Activated CD4-positive, alpha-beta memory T cell treated with anti-CD3 and anti-CD28 coated beads for 36 hours (primary cell): ENCODE measurements at regions of chr4 and their contacts with region 1.

Region 1: DNA sequence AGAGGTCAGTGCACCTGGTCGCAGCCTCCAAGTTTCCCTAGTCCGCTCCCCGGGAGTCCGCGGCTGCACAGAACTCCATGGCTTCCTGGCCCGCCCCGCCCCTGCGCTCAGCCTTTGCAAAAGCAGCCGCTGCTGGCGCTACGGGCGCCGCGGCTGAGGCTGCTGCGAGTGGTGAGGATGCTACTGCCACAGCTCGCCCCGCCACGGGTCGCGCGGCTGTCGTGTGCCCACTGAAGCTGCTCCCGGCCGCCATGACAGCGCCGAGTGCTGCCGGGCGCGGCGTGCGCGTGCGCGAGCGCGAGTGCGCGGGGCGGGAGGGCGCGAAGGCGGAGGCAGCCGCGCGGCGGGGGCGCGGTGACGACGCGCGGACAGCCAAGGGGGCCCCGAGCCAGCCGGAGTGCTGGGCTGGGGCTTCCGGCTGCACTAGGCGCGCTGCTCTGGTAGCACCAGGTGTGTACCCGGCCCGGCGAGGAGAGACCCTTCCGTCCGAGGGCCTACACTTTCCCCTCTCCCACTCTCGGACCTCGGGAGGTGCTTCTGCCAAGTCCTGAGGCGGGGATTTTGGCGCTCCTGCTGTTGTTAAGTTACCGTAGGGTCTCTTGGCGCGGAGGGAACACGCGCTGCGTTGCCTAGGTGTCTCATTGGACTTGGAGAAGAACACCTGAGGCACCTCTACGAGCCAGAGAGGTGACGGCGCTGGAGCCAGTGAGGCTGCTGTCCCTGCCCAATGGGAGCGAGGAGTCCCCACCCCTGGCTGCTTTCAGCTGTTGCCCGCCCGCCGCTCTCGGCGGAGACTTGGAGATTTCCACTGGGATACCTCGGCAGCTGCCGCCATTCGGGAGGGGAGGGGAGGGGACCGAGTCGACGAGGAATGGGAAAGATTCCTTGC is 619 bp upstream of the LRBA start:
- DNase-seq: peak; percentile 87
- H3K4me3 Mint-ChIP-seq: peak overlapping the region; percentile 100
- H3K27ac Mint-ChIP-seq: peak overlapping the region; percentile 95
- H3K4me1 Mint-ChIP-seq: peaks cover 23% of the 10 kb centered on the region
- H3K27me3 Mint-ChIP-seq: no peaks in the 10 kb centered on the region

Region 2: GRCh38 chr4:150886599-150886998 is 129.1 kb before region 1 on chr4:
- CTCF ChIA-PET with region 1: no interaction called
- POLR2A ChIA-PET with region 1: no interaction called
- intact Hi-C with region 1: loop called (anchors 5 kb)
- DNase-seq: no peak
- H3K4me3 Mint-ChIP-seq: no peak overlapping the region
- H3K27ac Mint-ChIP-seq: no peak overlapping the region
- H3K4me1 Mint-ChIP-seq: peaks cover 18% of the 10 kb centered on the region
- H3K27me3 Mint-ChIP-seq: no peaks in the 10 kb centered on the region

Region 3: DNA sequence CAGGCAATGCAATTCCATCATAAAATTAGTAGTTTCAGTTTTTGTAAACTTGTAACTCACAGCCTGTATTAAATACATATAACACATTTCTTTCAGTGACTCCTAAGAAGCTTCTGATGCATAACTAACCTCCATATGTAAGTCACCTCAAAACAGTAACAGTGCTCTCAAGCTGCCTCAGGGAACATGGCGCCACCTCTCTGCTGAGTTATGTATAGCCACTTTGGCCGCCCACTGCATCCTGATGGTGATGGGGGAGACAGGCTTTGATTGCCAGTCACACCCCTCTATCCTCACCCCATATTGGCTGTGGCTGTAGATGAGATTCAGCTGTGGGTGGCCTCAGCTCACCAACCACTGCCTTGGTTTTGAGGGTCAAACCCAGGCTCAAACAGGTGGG is 54.9 kb before region 1 on chr4:
- CTCF ChIA-PET with region 1: interaction called, 15 read pairs
- POLR2A ChIA-PET with region 1: no interaction called
- intact Hi-C with region 1: loop called (anchors 2 kb)
- DNase-seq: peak; percentile 81
- H3K4me3 Mint-ChIP-seq: no peak overlapping the region
- H3K27ac Mint-ChIP-seq: no peak overlapping the region
- H3K4me1 Mint-ChIP-seq: peaks cover 47% of the 10 kb centered on the region
- H3K27me3 Mint-ChIP-seq: no peaks in the 10 kb centered on the region

Region 4: GRCh38 chr4:150970685-150971151 is 45.0 kb before region 1 on chr4:
- CTCF ChIA-PET with region 1: no interaction called
- POLR2A ChIA-PET with region 1: interaction called, 4 read pairs
- intact Hi-C with region 1: loop called (anchors 2 kb)
- DNase-seq: no peak
- H3K4me3 Mint-ChIP-seq: no peak overlapping the region
- H3K27ac Mint-ChIP-seq: peak overlapping the region; percentile 10
- H3K4me1 Mint-ChIP-seq: peaks cover 59% of the 10 kb centered on the region
- H3K27me3 Mint-ChIP-seq: no peaks in the 10 kb centered on the region

Region 5: GRCh38 chr4:150986085-150986484 is 29.6 kb before region 1 on chr4:
- CTCF ChIA-PET with region 1: no interaction called
- POLR2A ChIA-PET with region 1: no interaction called
- intact Hi-C with region 1: loop called (anchors 1 kb)
- DNase-seq: peak; percentile 61
- H3K4me3 Mint-ChIP-seq: no peak overlapping the region
- H3K27ac Mint-ChIP-seq: no peak overlapping the region
- H3K4me1 Mint-ChIP-seq: peaks cover 33% of the 10 kb centered on the region
- H3K27me3 Mint-ChIP-seq: no peaks in the 10 kb centered on the region

Region 6: DNA sequence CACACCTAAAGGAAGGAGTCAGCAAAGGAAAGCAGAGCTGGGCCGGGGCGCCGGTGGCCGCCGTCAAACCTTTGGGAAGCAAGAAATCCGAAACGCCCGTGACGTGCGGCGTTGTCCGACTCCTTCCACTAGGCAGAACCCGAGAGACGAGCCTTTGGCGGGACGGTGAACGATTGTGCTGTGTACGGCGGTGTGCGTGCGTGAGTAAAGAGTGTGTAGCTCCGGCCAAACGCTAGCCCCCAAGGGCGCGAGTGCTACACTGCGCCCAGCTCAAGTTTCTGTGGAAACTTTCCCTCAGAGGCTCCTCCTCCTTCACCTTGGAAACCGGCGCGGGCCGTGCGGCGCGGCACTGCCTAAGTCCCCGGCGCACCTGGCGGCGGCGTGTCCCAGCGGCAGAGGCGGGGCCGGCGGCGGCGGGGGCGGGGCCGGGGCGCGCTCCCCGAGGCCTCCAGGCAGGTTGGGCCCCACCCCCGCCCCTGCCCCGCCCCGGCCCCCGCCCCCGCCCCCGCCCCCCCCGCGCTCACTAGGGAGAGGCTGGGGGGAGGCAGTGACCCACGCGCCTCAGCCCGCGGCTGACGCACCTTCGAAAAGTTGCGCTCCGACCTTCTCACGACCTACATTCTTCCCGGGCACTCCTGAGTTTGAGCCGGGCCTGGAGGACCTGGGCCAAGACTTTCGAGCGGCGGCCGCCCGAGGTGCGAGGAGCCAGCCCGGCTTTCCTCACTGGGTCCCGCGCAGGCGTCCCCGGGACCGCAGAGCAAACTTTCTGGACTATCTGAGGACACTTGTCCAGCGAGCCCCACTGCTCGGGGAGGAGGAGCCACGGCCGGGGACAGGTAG is 393.1 kb after region 1 on chr4 and contains the start of gene FHIP1A:
- CTCF ChIA-PET with region 1: no interaction called
- POLR2A ChIA-PET with region 1: no interaction called
- intact Hi-C with region 1: loop called (anchors 5 kb)
- DNase-seq: peak; percentile 88
- H3K4me3 Mint-ChIP-seq: peak within 1 kb of the TSS; percentile 86
- H3K27ac Mint-ChIP-seq: peak within 1 kb of the TSS; percentile 65
- H3K4me1 Mint-ChIP-seq: peaks cover 22% of the 10 kb centered on the region
- H3K27me3 Mint-ChIP-seq: peaks cover 15% of the 10 kb centered on the region
- total RNA-seq, gene FHIP1A: 0.45 to 0.46 TPM

Region 7: GRCh38 chr4:151760712-151761527 is 745.2 kb after region 1 on chr4 and contains the start of gene GATB:
- CTCF ChIA-PET with region 1: no interaction called
- POLR2A ChIA-PET with region 1: no interaction called
- intact Hi-C with region 1: loop called (anchors 1 kb)
- DNase-seq: peak; percentile 95
- H3K4me3 Mint-ChIP-seq: peak within 1 kb of the TSS; percentile 91
- H3K27ac Mint-ChIP-seq: peak within 1 kb of the TSS; percentile 64
- H3K4me1 Mint-ChIP-seq: peaks cover 13% of the 10 kb centered on the region
- H3K27me3 Mint-ChIP-seq: no peaks in the 10 kb centered on the region
- total RNA-seq, gene GATB: 16.1 to 16.5 TPM